Heart right ventricle (tissue), 16 donors: ENCODE measurements at regions of chr5 and their contacts with region 1.

Region 1: GRCh38 chr5:140351609-140352334 is 5.4 kb upstream of the HBEGF start:
- DNase-seq: peak in 1 of 2 donors; percentile 85
- ATAC-seq: peak in 7 of 8 donors; percentile 32 to 70 (median 51)
- H3K4me3 ChIP-seq: no peak overlapping the region
- H3K27ac ChIP-seq: no peak overlapping the region
- H3K4me1 ChIP-seq: peaks cover 11 to 25% (median 18%) of the 10 kb centered on the region in 9 donors
- H3K27me3 ChIP-seq: no peaks in the 10 kb centered on the region
- CTCF ChIP-seq: peak; percentile 84 to 93 (median 90)

Region 2: GRCh38 chr5:140169410-140169809 is 182.4 kb before region 1 on chr5:
- intact Hi-C with region 1: loop called in 7 of 10 experiments (anchors 2 to 5 kb)
- DNase-seq: no peak
- ATAC-seq: no peak
- H3K4me3 ChIP-seq: no peak overlapping the region
- H3K27ac ChIP-seq: no peak overlapping the region
- H3K4me1 ChIP-seq: peaks cover 0 to 21% (median 15%) of the 10 kb centered on the region in 9 donors
- H3K27me3 ChIP-seq: no peaks in the 10 kb centered on the region
- CTCF ChIP-seq: peak in 6 of 9 donors; percentile 13 to 44 (median 38)